A549 (cell line): ENCODE measurements at regions of chr1 and their contacts with region 1.

Region 1: GRCh38 chr1:207052911-207053769 is at the start of gene PFKFB2:
- DNase-seq: peak; percentile 98
- ATAC-seq: peak; percentile 88 to 89
- H3K4me3 ChIP-seq: peak within 1 kb of the TSS; percentile 91
- H3K27ac ChIP-seq: peak within 1 kb of the TSS; percentile 94 to 97
- H3K4me1 ChIP-seq: peaks cover 27% of the 10 kb centered on the region
- CTCF ChIP-seq: no peak
- EP300 ChIP-seq: no peak
- POLR2A ChIP-seq: peak; percentile 84
- RAD21 ChIP-seq: 0 out of 5 replicates have a peak, but pooled peaks have one; percentile 2 to 16
- polyA plus RNA-seq, gene PFKFB2: 6.8 and 7.4 TPM in 2 replicates

Region 2: GRCh38 chr1:206935491-206936067 is 117.6 kb before region 1 on chr1:
- CTCF ChIA-PET with region 1: no interaction called
- POLR2A ChIA-PET with region 1: no interaction called
- DNase-seq: peak; percentile 56 to 68
- ATAC-seq: peak; percentile 87 to 97
- H3K4me3 ChIP-seq: no peak overlapping the region
- H3K27ac ChIP-seq: no peak overlapping the region
- H3K4me1 ChIP-seq: no peaks in the 10 kb centered on the region
- CTCF ChIP-seq: peak; percentile 40
- EP300 ChIP-seq: no peak
- POLR2A ChIP-seq: no peak
- RAD21 ChIP-seq: peak; percentile 41 to 63; a peak in 4 of 5 replicates

Region 3: GRCh38 chr1:207025144-207025880 is 27.8 kb before region 1 on chr1:
- CTCF ChIA-PET with region 1: interaction called, 40 read pairs
- POLR2A ChIA-PET with region 1: interaction called, 8 read pairs
- DNase-seq: peak in 1 of 2 experiments; percentile 78
- ATAC-seq: peak; percentile 33 to 63; a peak in 5 of 6 replicates
- H3K4me3 ChIP-seq: peak overlapping the region; percentile 20; the same call in 1 of the 3 replicates
- H3K27ac ChIP-seq: peak overlapping the region; percentile 86 to 89
- H3K4me1 ChIP-seq: peaks cover 96% of the 10 kb centered on the region
- CTCF ChIP-seq: no peak
- EP300 ChIP-seq: peak; percentile 28 to 69; a peak in 3 of 5 replicates
- POLR2A ChIP-seq: no peak
- RAD21 ChIP-seq: peak in 1 of 2 experiments; percentile 20; a peak in 2 of 5 replicates

Region 4: GRCh38 chr1:207040181-207040533 is 13.0 kb before region 1 on chr1:
- CTCF ChIA-PET with region 1: interaction called, 16 read pairs
- POLR2A ChIA-PET with region 1: interaction called, 3 read pairs
- DNase-seq: no peak
- ATAC-seq: peak; percentile 33 to 53; a peak in 3 of 6 replicates
- H3K4me3 ChIP-seq: no peak overlapping the region
- H3K27ac ChIP-seq: peak overlapping the region in 1 of 2 experiments; percentile 62; a peak in 2 of 6 replicates
- H3K4me1 ChIP-seq: peaks cover 23% of the 10 kb centered on the region
- CTCF ChIP-seq: no peak
- EP300 ChIP-seq: no peak
- POLR2A ChIP-seq: no peak
- RAD21 ChIP-seq: no peak

Region 5: GRCh38 chr1:207077470-207078377 is 24.6 kb after region 1 on chr1:
- CTCF ChIA-PET with region 1: interaction called, 17 read pairs
- POLR2A ChIA-PET with region 1: interaction called, 8 read pairs
- DNase-seq: peak; percentile 62 to 78
- ATAC-seq: peak; percentile 67 to 93; a peak in 5 of 6 replicates
- H3K4me3 ChIP-seq: no peak overlapping the region
- H3K27ac ChIP-seq: peak overlapping the region; percentile 12 to 29; a peak in 1 of 6 replicates
- H3K4me1 ChIP-seq: peaks cover 28% of the 10 kb centered on the region
- CTCF ChIP-seq: peak; percentile 96
- EP300 ChIP-seq: no peak
- POLR2A ChIP-seq: no peak
- RAD21 ChIP-seq: peak; percentile 90 to 98

Region 6: DNA sequence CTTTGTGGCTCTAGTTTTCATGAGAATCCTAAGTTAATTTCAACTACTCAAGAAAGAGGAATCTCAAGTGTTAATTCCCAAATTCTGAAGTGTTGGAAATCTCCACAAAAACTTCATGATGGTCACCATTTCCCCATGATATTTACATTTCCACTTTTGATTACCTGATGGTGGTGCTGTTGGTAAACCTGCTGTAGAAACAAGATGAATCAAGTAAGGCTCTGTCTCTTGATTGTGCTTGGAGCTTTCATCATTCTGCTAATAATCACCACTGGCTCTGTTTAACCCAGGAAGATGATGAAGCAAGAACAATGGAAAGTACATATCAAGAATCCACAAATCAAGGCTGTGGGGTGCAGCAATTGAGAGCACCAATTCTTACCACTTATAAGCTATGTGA is 128.7 kb after region 1 on chr1:
- CTCF ChIA-PET with region 1: no interaction called
- POLR2A ChIA-PET with region 1: no interaction called
- DNase-seq: peak in 1 of 2 experiments; percentile 20
- ATAC-seq: no peak
- H3K4me3 ChIP-seq: no peak overlapping the region
- H3K27ac ChIP-seq: no peak overlapping the region
- H3K4me1 ChIP-seq: no peaks in the 10 kb centered on the region
- CTCF ChIP-seq: peak; percentile 22; the same call in 2 of the 3 replicates
- EP300 ChIP-seq: no peak
- POLR2A ChIP-seq: no peak
- RAD21 ChIP-seq: peak; percentile 49 to 62; a peak in 4 of 5 replicates

Region 7: GRCh38 chr1:207404849-207405525 is 351.8 kb after region 1 on chr1:
- CTCF ChIA-PET with region 1: interaction called, 13 read pairs
- POLR2A ChIA-PET with region 1: interaction called, 4 read pairs
- DNase-seq: peak; percentile 68 to 77
- ATAC-seq: peak; percentile 92 to 93
- H3K4me3 ChIP-seq: no peak overlapping the region
- H3K27ac ChIP-seq: no peak overlapping the region
- H3K4me1 ChIP-seq: no peaks in the 10 kb centered on the region; the same call in 2 of the 3 replicates
- CTCF ChIP-seq: peak; percentile 94
- EP300 ChIP-seq: no peak
- POLR2A ChIP-seq: no peak
- RAD21 ChIP-seq: peak; percentile 90 to 92